ENCODE measurements at regions of chr1 and their contacts with region 1.

Region 1: GRCh38 chr1:94169126-94169525 is 48.2 kb upstream of the ABCA4 start:
- DNase-seq: no peak
- H3K4me3 ChIP-seq: no peak overlapping the region
- H3K27ac ChIP-seq: no peak overlapping the region
- H3K4me1 ChIP-seq: no peaks in the 10 kb centered on the region
- H3K27me3 ChIP-seq: no peaks in the 10 kb centered on the region
- CTCF ChIP-seq: no peak

Region 2: GRCh38 chr1:94209425-94209824 is 40.3 kb after region 1 on chr1:
- CTCF ChIA-PET with region 1: no interaction called
- dilution Hi-C with region 1: no loop called
- in situ Hi-C with region 1: no loop called
- intact Hi-C with region 1: loop called (anchors 5 kb)
- DNase-seq: peak; percentile 72
- H3K4me3 ChIP-seq: no peak overlapping the region
- H3K27ac ChIP-seq: no peak overlapping the region
- H3K4me1 ChIP-seq: peaks cover 20% of the 10 kb centered on the region
- H3K27me3 ChIP-seq: no peaks in the 10 kb centered on the region
- CTCF ChIP-seq: no peak

Measured in mammary epithelial cell (primary cell).